ENCODE measurements at regions of chr7 and their contacts with region 1.

Region 1: DNA sequence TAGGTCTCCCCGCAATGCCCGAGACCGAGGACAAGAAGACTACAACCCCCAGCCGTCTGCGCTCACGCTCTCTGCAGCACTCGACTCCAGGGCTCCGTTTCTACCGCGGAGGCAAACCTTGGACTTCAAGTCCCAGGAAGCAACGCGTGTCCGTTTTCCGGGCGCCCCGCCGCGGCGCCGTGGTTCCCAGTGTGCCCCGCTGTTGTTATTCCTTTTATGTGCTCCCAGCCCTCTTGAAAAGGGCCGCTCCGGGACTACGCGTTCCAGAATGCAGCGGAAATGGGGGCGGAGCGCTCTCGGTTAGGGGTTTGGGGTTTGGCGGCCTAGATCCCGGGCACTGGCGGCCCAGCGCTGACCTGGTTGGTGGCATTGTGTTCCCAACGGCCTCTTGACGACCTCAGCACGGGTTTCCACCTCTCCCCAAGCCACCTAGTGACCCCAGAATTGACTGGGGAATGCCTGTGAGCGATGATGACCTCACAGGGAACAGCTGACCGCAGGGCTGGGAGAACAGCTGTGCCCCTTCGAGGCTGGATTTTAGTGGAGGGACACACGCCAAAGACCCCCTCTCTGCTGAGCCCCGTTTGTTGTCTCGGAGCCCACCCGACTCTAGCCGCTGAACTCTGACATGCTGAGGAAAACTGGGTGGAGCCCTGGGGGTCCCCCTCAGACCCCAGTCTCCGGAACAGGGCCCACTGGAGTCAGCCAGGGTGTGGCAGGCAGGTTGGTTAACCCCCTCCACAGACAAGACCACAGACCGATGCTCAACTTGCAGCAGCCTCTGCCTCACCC is 488 bp upstream of the CDK5 start:
- DNase-seq: peak; percentile 99
- H3K4me3 ChIP-seq: peak overlapping the region; percentile 57 to 74 (median 65)
- H3K27ac ChIP-seq: peak overlapping the region; percentile 88
- H3K4me1 ChIP-seq: peaks cover 49% of the 10 kb centered on the region
- H3K27me3 ChIP-seq: no peaks in the 10 kb centered on the region
- CTCF ChIP-seq: peak in 1 of 2 donors; percentile 12

Region 2: GRCh38 chr7:150867605-150868004 is 190.6 kb before region 1 on chr7:
- CTCF ChIA-PET with region 1: no interaction called
- dilution Hi-C with region 1: no loop called
- in situ Hi-C with region 1: no loop called
- intact Hi-C with region 1: no loop called
- DNase-seq: no peak
- H3K4me3 ChIP-seq: no peak overlapping the region
- H3K27ac ChIP-seq: no peak overlapping the region
- H3K4me1 ChIP-seq: no peaks in the 10 kb centered on the region
- H3K27me3 ChIP-seq: peaks cover 3% of the 10 kb centered on the region
- CTCF ChIP-seq: no peak

Region 3: GRCh38 chr7:151028131-151028947 is 29.8 kb before region 1 on chr7 and contains the start of gene ABCB8:
- CTCF ChIA-PET with region 1: interaction called, 3 read pairs
- dilution Hi-C with region 1: no loop called
- in situ Hi-C with region 1: no loop called
- intact Hi-C with region 1: loop called (anchors 1 kb)
- DNase-seq: peak; percentile 99
- H3K4me3 ChIP-seq: peak within 1 kb of the TSS; percentile 60 to 80 (median 73)
- H3K27ac ChIP-seq: peak within 1 kb of the TSS; percentile 93
- H3K4me1 ChIP-seq: peaks cover 29% of the 10 kb centered on the region
- H3K27me3 ChIP-seq: no peaks in the 10 kb centered on the region
- CTCF ChIP-seq: peak in 1 of 2 donors; percentile 61
- total RNA-seq, gene ABCB8: 29.8 to 57.2 TPM

Region 4: GRCh38 chr7:151080522-151081169 is 22.5 kb after region 1 on chr7 and contains the start of gene FASTK:
- CTCF ChIA-PET with region 1: no interaction called
- dilution Hi-C with region 1: no loop called
- in situ Hi-C with region 1: no loop called
- intact Hi-C with region 1: loop called (anchors 1 kb)
- DNase-seq: peak; percentile 90
- H3K4me3 ChIP-seq: peak within 1 kb of the TSS; percentile 71 to 94 (median 80)
- H3K27ac ChIP-seq: peak within 1 kb of the TSS; percentile 52
- H3K4me1 ChIP-seq: peaks cover 35% of the 10 kb centered on the region
- H3K27me3 ChIP-seq: no peaks in the 10 kb centered on the region
- CTCF ChIP-seq: no peak
- total RNA-seq, gene FASTK: 49.7 to 68.8 TPM

Region 5: DNA sequence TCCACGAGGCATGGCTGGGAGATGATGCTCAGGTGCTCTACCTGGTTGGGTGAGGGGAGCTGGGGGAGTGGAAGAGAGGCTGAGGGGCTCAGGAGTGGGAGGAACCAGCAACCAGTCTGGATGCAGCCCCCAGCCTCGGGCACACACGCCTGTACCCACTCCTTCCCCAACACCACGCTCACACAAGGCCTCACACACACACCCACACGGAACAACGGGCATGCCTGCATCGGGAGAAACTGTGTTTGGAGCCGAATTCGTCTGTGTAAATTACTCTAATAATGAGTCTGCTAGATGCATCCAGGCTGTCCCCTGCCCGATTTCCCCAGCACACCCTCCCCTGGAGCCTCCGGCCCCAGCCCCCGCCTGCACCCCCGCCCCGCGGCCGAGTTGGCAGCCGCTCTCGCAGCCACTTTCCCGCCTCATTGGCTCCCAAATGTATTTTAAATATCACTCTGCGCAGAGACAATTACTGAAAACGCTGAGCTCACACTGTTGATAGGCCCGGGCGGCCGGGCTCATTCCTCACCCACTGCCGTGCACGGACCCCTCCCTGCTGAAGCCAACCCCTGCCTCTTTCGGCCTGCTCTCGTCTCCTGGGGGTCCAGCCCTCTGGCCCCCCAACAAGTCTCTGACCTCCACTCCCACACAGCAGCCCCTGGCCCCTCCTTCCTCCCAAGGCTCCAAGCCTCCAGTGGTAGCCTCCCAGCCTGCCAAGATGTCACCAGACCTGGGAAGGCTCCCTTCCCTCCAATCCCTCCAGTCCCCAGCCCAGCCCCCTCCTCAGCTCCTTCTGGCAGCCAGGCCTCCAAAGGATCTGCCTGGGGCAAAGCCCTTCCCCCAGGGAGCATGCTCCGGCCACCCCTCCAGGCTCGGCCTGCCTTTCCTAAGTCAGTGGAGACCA is 141.0 kb after region 1 on chr7:
- CTCF ChIA-PET with region 1: no interaction called
- dilution Hi-C with region 1: no loop called
- in situ Hi-C with region 1: no loop called
- intact Hi-C with region 1: no loop called
- DNase-seq: no peak
- H3K4me3 ChIP-seq: no peak overlapping the region
- H3K27ac ChIP-seq: no peak overlapping the region
- H3K4me1 ChIP-seq: no peaks in the 10 kb centered on the region
- H3K27me3 ChIP-seq: no peaks in the 10 kb centered on the region
- CTCF ChIP-seq: no peak

Measured in mammary epithelial cell (primary cell).